ENCODE measurements at regions of chr1 and their contacts with region 1.

Region 1: DNA sequence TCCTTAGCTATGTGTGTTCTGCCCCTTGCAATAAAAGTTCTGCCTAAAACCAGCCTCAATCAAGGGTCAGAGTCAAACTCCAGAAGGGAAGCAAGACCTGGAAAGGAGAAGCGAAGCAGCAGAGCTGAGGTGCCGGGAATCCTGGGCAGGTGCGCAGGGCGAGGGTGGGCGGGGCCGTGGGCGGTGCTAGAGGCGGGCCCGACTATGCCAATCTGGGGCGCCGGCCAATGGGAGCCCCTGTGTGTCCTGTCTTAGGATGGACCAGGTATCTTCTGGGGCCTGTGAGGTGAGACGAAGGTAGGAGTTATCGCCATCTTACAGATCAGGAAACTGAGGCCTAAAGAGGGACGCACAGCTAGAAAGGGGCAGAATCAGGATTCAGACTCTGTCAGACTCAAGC is 120.3 kb downstream of the PTPRU start:
- DNase-seq: no peak
- H3K4me3 ChIP-seq: no peak overlapping the region
- H3K27ac ChIP-seq: no peak overlapping the region
- H3K4me1 ChIP-seq: peaks cover 21% of the 10 kb centered on the region
- H3K27me3 ChIP-seq: no peaks in the 10 kb centered on the region
- CTCF ChIP-seq: no peak

Region 2: GRCh38 chr1:29259802-29260441 is 96.7 kb before region 1 on chr1:
- CTCF ChIA-PET with region 1: no interaction called
- dilution Hi-C with region 1: loop called (anchors 10 kb)
- in situ Hi-C with region 1: no loop called
- intact Hi-C with region 1: no loop called
- DNase-seq: no peak
- H3K4me3 ChIP-seq: peak overlapping the region in 2 of 3 experiments; percentile 42 to 46
- H3K27ac ChIP-seq: no peak overlapping the region
- H3K4me1 ChIP-seq: peaks cover 14% of the 10 kb centered on the region
- H3K27me3 ChIP-seq: no peaks in the 10 kb centered on the region
- CTCF ChIP-seq: no peak

Measured in mammary epithelial cell (primary cell).